GM12878 (cell line): ENCODE measurements at regions of chr2 and their contacts with region 1.

Region 1: GRCh38 chr2:45833968-45834344 is 182.5 kb downstream of the PRKCE start:
- DNase-seq: peak; percentile 77
- ATAC-seq: peak; percentile 85
- H3K4me3 ChIP-seq: peak overlapping the region; percentile 39; the same call in 1 of the 2 replicates
- H3K27ac ChIP-seq: peak overlapping the region; percentile 70
- H3K4me1 ChIP-seq: peaks cover 54% of the 10 kb centered on the region
- H3K27me3 ChIP-seq: no peaks in the 10 kb centered on the region
- CTCF ChIP-seq: peak in 2 of 3 experiments; percentile 3 to 15; a peak in 1 of 6 replicates
- EP300 ChIP-seq: no peak
- POLR2A ChIP-seq: peak; percentile 56
- RAD21 ChIP-seq: peak; percentile 29; the same call in 1 of the 2 replicates

Region 2: DNA sequence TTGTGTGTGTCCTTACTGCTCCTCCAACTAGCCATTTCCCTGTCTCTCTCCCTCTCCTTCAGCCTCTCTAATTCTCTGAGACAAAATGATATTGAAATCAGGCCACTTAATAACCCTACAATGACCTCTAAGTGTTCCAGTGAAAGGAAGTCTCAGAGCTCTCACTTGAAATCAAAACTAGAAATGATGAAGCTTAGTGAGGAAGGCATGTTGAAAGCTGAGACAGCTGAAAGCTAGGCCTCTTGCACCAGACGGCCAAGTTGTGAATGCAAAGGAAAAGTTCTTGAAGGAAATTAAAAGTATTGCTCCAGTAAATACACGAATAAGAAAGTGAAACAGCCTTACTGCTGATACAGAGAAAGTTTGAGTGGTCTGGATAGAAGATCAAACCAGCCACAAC is 109.6 kb before region 1 on chr2:
- CTCF ChIA-PET with region 1: interaction called, 11 read pairs
- POLR2A ChIA-PET with region 1: interaction called, 12 read pairs
- RAD21 ChIA-PET with region 1: interaction called, 29 read pairs
- SMC1A ChIA-PET with region 1: interaction called, 57 read pairs
- in situ Hi-C with region 1: no loop called
- intact Hi-C with region 1: loop called (anchors 2 kb)
- DNase-seq: no peak
- ATAC-seq: peak; percentile 3; the same call in 1 of the 3 replicates
- H3K4me3 ChIP-seq: no peak overlapping the region
- H3K27ac ChIP-seq: peak overlapping the region; percentile 54
- H3K4me1 ChIP-seq: peaks cover 50% of the 10 kb centered on the region
- H3K27me3 ChIP-seq: no peaks in the 10 kb centered on the region
- CTCF ChIP-seq: no peak
- EP300 ChIP-seq: no peak
- POLR2A ChIP-seq: no peak
- RAD21 ChIP-seq: no peak

Region 3: DNA sequence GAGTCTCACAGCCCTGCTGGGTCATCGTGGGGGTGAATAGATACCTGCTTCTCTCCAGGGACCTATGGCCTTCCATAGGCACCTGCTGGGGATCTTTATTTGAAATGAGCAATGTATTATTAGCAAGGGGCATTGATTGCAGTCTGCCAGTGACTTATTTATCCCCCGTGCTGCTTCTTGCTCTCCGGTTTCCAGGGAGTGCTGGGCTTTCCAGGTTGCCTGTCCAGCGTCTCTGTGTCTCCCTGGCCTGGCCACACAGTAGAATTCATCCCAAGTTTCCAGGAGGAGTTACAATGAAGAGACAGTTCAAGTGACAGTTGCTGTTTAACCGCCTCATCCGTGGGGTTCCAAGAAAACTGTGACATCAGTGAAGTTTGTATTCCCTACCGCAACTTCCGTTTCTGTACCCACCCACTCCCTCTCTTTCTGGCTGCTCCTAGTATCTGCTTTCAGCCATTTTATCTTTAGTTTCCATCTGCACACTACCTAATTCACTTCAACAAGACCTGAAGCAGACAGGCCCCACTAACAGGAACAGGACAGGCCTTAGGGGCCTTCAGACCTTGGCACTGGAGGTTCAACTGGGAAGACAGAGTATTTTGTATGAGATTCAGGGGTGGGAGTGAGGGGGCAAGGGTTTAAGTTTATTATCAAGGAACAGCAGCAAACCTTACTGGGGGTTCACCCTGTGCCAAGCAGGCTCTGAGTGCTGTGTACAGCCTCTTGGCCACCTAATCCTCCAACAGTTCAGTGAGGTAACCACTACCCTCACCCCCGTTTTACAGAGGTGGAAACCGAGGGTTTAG is 47.7 kb before region 1 on chr2:
- CTCF ChIA-PET with region 1: interaction called, 68 read pairs
- POLR2A ChIA-PET with region 1: interaction called, 3 read pairs
- RAD21 ChIA-PET with region 1: interaction called, 32 read pairs
- SMC1A ChIA-PET with region 1: interaction called, 63 read pairs
- in situ Hi-C with region 1: no loop called
- intact Hi-C with region 1: no loop called
- DNase-seq: no peak
- ATAC-seq: no peak
- H3K4me3 ChIP-seq: no peak overlapping the region
- H3K27ac ChIP-seq: no peak overlapping the region
- H3K4me1 ChIP-seq: peaks cover 12% of the 10 kb centered on the region
- H3K27me3 ChIP-seq: no peaks in the 10 kb centered on the region
- CTCF ChIP-seq: no peak
- EP300 ChIP-seq: no peak
- POLR2A ChIP-seq: no peak
- RAD21 ChIP-seq: no peak

Region 4: DNA sequence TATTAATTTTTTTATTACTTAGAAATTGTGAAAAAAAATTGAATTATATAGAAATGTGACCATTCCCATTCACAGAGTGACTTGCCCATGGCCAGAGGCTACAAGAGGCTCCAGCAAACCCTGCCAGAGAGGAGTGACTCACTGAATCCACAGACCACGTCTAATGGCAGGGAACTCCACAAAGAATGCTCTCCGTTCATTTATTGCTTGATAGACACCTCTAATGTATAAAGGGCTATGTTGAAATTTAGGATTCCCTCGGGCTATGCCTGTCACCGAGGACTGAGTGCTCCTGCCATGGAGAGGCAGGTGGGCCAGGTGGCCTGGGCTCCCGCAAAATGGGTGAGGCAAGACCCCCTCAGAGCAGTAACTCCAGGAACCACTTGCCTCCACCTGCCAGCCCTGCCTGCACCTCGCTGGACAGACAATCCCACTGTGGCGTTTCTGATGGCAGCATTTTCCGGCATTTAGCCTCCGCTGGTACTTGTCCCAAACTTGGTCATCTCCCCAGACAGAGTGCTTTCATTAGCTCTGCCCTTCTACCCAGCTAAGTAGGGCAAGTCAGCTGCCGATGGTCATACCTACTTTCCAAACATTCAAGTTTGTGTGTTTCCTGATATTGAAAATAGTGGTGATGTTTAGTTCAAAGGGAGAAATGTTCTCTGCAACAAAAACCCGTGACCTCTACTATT is 17.8 kb after region 1 on chr2:
- CTCF ChIA-PET with region 1: interaction called, 5 read pairs
- POLR2A ChIA-PET with region 1: interaction called, 77 read pairs
- RAD21 ChIA-PET with region 1: interaction called, 111 read pairs
- SMC1A ChIA-PET with region 1: interaction called, 246 read pairs
- in situ Hi-C with region 1: no loop called
- intact Hi-C with region 1: no loop called
- DNase-seq: no peak
- ATAC-seq: no peak
- H3K4me3 ChIP-seq: no peak overlapping the region
- H3K27ac ChIP-seq: no peak overlapping the region
- H3K4me1 ChIP-seq: peaks cover 27% of the 10 kb centered on the region
- H3K27me3 ChIP-seq: no peaks in the 10 kb centered on the region
- CTCF ChIP-seq: no peak
- EP300 ChIP-seq: no peak
- POLR2A ChIP-seq: no peak
- RAD21 ChIP-seq: no peak

Region 5: DNA sequence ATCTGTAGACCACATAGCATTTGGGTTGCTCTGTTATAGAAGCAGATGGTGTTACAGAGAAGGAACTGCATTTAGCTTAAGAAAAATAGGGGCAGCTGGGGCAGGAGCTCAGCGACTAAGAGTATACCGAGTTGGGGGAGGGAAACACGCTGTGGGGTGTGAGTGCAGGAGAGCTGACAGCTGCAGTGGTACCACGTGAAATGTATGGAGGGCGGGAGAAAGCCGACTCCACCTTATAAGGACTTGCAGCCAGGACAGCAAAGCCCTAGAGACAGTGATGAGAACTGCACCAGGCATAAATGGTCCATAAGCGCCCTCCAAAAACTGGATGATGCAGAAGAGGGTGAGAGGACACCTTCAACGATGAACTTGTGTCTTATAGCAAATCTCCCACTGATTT is 55.1 kb after region 1 on chr2:
- CTCF ChIA-PET with region 1: interaction called, 48 read pairs
- POLR2A ChIA-PET with region 1: interaction called, 8 read pairs
- RAD21 ChIA-PET with region 1: interaction called, 100 read pairs
- SMC1A ChIA-PET with region 1: interaction called, 224 read pairs
- in situ Hi-C with region 1: no loop called
- intact Hi-C with region 1: no loop called
- DNase-seq: peak; percentile 73
- ATAC-seq: peak; percentile 96
- H3K4me3 ChIP-seq: no peak overlapping the region
- H3K27ac ChIP-seq: peak overlapping the region; percentile 85
- H3K4me1 ChIP-seq: peaks cover 54% of the 10 kb centered on the region
- H3K27me3 ChIP-seq: no peaks in the 10 kb centered on the region
- CTCF ChIP-seq: peak; percentile 31 to 63 (median 51); a peak in 4 of 6 replicates
- EP300 ChIP-seq: peak in 1 of 2 experiments; percentile 47; a peak in 1 of 4 replicates
- POLR2A ChIP-seq: 0 out of 2 replicates have a peak, but pooled peaks have one; percentile 29
- RAD21 ChIP-seq: peak; percentile 13; the same call in 1 of the 2 replicates

Region 6: GRCh38 chr2:45922571-45922988 is 88.6 kb after region 1 on chr2:
- CTCF ChIA-PET with region 1: interaction called, 4 read pairs
- POLR2A ChIA-PET with region 1: interaction called, 5 read pairs
- RAD21 ChIA-PET with region 1: interaction called, 18 read pairs
- SMC1A ChIA-PET with region 1: interaction called, 4 read pairs
- in situ Hi-C with region 1: no loop called
- intact Hi-C with region 1: no loop called
- DNase-seq: no peak
- ATAC-seq: no peak
- H3K4me3 ChIP-seq: no peak overlapping the region
- H3K27ac ChIP-seq: no peak overlapping the region
- H3K4me1 ChIP-seq: peaks cover 22% of the 10 kb centered on the region
- H3K27me3 ChIP-seq: no peaks in the 10 kb centered on the region
- CTCF ChIP-seq: no peak
- EP300 ChIP-seq: no peak
- POLR2A ChIP-seq: no peak
- RAD21 ChIP-seq: no peak

Region 7: GRCh38 chr2:46751897-46752296 is 917.9 kb after region 1 on chr2:
- CTCF ChIA-PET with region 1: no interaction called
- POLR2A ChIA-PET with region 1: no interaction called
- RAD21 ChIA-PET with region 1: no interaction called
- SMC1A ChIA-PET with region 1: no interaction called
- in situ Hi-C with region 1: no loop called
- intact Hi-C with region 1: no loop called
- DNase-seq: no peak
- ATAC-seq: no peak
- H3K4me3 ChIP-seq: no peak overlapping the region
- H3K27ac ChIP-seq: no peak overlapping the region
- H3K4me1 ChIP-seq: no peaks in the 10 kb centered on the region; the same call in 1 of the 2 replicates
- H3K27me3 ChIP-seq: no peaks in the 10 kb centered on the region
- CTCF ChIP-seq: no peak
- EP300 ChIP-seq: no peak
- POLR2A ChIP-seq: no peak
- RAD21 ChIP-seq: no peak